ENCODE measurements at regions of chr21 and their contacts with region 1.

Region 1: GRCh38 chr21:37619464-37619974 is 252.9 kb downstream of the DYRK1A start:
- DNase-seq: peak; percentile 79
- H3K4me3 ChIP-seq: no peak overlapping the region
- H3K27ac ChIP-seq: no peak overlapping the region
- H3K4me1 ChIP-seq: peaks cover 5% of the 10 kb centered on the region
- H3K27me3 ChIP-seq: no peaks in the 10 kb centered on the region
- CTCF ChIP-seq: peak; percentile 14 to 41

Region 2: DNA sequence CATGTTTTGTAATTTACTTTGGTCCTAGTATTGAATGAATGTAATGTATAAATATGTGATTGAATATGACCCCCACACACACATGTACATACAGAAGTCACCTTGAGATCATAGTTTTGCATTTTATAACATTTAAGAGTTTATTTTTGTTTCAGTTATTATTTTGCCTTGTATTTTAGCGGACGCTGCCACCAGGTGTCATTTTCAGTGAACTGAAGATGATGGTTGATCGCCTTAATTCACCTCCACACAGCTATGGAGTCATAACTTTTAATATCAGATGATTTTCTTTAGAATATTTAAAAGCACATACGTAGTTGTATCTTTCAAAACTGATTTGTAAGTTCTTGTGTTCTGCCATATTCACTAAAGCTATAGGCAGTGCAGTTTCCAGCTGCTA is 122.5 kb before region 1 on chr21:
- CTCF ChIA-PET with region 1: no interaction called
- dilution Hi-C with region 1: no loop called
- in situ Hi-C with region 1: no loop called
- intact Hi-C with region 1: no loop called
- DNase-seq: no peak
- H3K4me3 ChIP-seq: no peak overlapping the region
- H3K27ac ChIP-seq: no peak overlapping the region
- H3K4me1 ChIP-seq: no peaks in the 10 kb centered on the region
- H3K27me3 ChIP-seq: no peaks in the 10 kb centered on the region
- CTCF ChIP-seq: peak in 1 of 2 donors; percentile 37

Region 3: GRCh38 chr21:37522641-37523295 is 96.8 kb before region 1 on chr21:
- CTCF ChIA-PET with region 1: no interaction called
- dilution Hi-C with region 1: loop called (anchors 5 kb)
- in situ Hi-C with region 1: no loop called
- intact Hi-C with region 1: no loop called
- DNase-seq: no peak
- H3K4me3 ChIP-seq: no peak overlapping the region
- H3K27ac ChIP-seq: no peak overlapping the region
- H3K4me1 ChIP-seq: no peaks in the 10 kb centered on the region
- H3K27me3 ChIP-seq: no peaks in the 10 kb centered on the region
- CTCF ChIP-seq: no peak

Region 4: GRCh38 chr21:37658817-37659458 is 39.4 kb after region 1 on chr21:
- CTCF ChIA-PET with region 1: no interaction called
- dilution Hi-C with region 1: no loop called
- in situ Hi-C with region 1: no loop called
- intact Hi-C with region 1: loop called (anchors 1 kb)
- DNase-seq: peak; percentile 87
- H3K4me3 ChIP-seq: no peak overlapping the region
- H3K27ac ChIP-seq: peak overlapping the region; percentile 15
- H3K4me1 ChIP-seq: peaks cover 23% of the 10 kb centered on the region
- H3K27me3 ChIP-seq: no peaks in the 10 kb centered on the region
- CTCF ChIP-seq: peak; percentile 42 to 65